CD14-positive monocyte (primary cell): ENCODE measurements at regions of chr13 and their contacts with region 1.

Region 1: GRCh38 chr13:30739761-30740642 is 4.7 kb downstream of the ALOX5AP start:
- DNase-seq: peak; percentile 74 to 93 (median 88)
- H3K4me3 ChIP-seq: peak overlapping the region in 2 of 3 experiments; percentile 47 to 64
- H3K4me3 Mint-ChIP-seq: peak overlapping the region; percentile 80 to 86
- H3K27ac ChIP-seq: peak overlapping the region; percentile 40 to 89
- H3K27ac Mint-ChIP-seq: peak overlapping the region; percentile 91 to 98 (median 97)
- H3K4me1 ChIP-seq: peaks cover 90 to 99% of the 10 kb centered on the region in 2 donors
- H3K4me1 Mint-ChIP-seq: peaks cover 92% of the 10 kb centered on the region
- H3K27me3 ChIP-seq: no peaks in the 10 kb centered on the region
- H3K27me3 Mint-ChIP-seq: peaks cover 7 to 11% (median 10%) of the 10 kb centered on the region in 3 donors
- CTCF ChIP-seq: no peak

Region 2: GRCh38 chr13:30673669-30674521 is 66.1 kb before region 1 on chr13:
- intact Hi-C with region 1: loop called (anchors 2 to 10 kb)
- DNase-seq: peak; percentile 96 to 98 (median 97)
- H3K4me3 ChIP-seq: peak overlapping the region; percentile 30 to 71 (median 46)
- H3K4me3 Mint-ChIP-seq: peak overlapping the region; percentile 89 to 95
- H3K27ac ChIP-seq: peak overlapping the region; percentile 14 to 65
- H3K27ac Mint-ChIP-seq: peak overlapping the region; percentile 66 to 91 (median 89)
- H3K4me1 ChIP-seq: peaks cover 18 to 20% of the 10 kb centered on the region in 2 donors
- H3K4me1 Mint-ChIP-seq: peaks cover 25% of the 10 kb centered on the region
- H3K27me3 ChIP-seq: no peaks in the 10 kb centered on the region
- H3K27me3 Mint-ChIP-seq: peaks cover 0 to 5% (median 2%) of the 10 kb centered on the region in 3 donors
- CTCF ChIP-seq: peak; percentile 78

Region 3: GRCh38 chr13:30712536-30713532 is 27.2 kb before region 1 on chr13:
- intact Hi-C with region 1: loop called (anchors 1 to 2 kb)
- DNase-seq: peak; percentile 98 to 99 (median 99)
- H3K4me3 ChIP-seq: peak overlapping the region in 1 of 3 experiments; percentile 33
- H3K4me3 Mint-ChIP-seq: peak overlapping the region; percentile 72 to 85
- H3K27ac ChIP-seq: peak overlapping the region; percentile 62 to 91
- H3K27ac Mint-ChIP-seq: peak overlapping the region; percentile 91 to 100 (median 99)
- H3K4me1 ChIP-seq: peaks cover 56 to 66% of the 10 kb centered on the region in 2 donors
- H3K4me1 Mint-ChIP-seq: peaks cover 68% of the 10 kb centered on the region
- H3K27me3 ChIP-seq: peaks cover 13 to 22% of the 10 kb centered on the region in 2 donors
- H3K27me3 Mint-ChIP-seq: peaks cover 24 to 26% (median 25%) of the 10 kb centered on the region in 3 donors
- CTCF ChIP-seq: no peak

Region 4: GRCh38 chr13:30787738-30788525 is 47.9 kb after region 1 on chr13:
- intact Hi-C with region 1: loop called (anchors 2 to 10 kb)
- DNase-seq: no peak
- H3K4me3 ChIP-seq: no peak overlapping the region
- H3K4me3 Mint-ChIP-seq: peak overlapping the region in 1 of 2 donors; percentile 41
- H3K27ac ChIP-seq: no peak overlapping the region
- H3K27ac Mint-ChIP-seq: peak overlapping the region in 1 of 7 donors; percentile 73
- H3K4me1 ChIP-seq: peaks cover 14 to 15% of the 10 kb centered on the region in 2 donors
- H3K4me1 Mint-ChIP-seq: peaks cover 32% of the 10 kb centered on the region
- H3K27me3 ChIP-seq: no peaks in the 10 kb centered on the region
- H3K27me3 Mint-ChIP-seq: peaks cover 6 to 15% (median 14%) of the 10 kb centered on the region in 3 donors
- CTCF ChIP-seq: no peak